Heart right ventricle (tissue), 16 donors: ENCODE measurements at regions of chr9 and their contacts with region 1.

Region 1: GRCh38 chr9:134929193-134930158 is 11.8 kb upstream of the FCN1 start:
- DNase-seq: peak in 1 of 2 donors; percentile 42
- ATAC-seq: peak; percentile 76 to 91 (median 85)
- H3K4me3 ChIP-seq: peak overlapping the region in 1 of 10 donors; percentile 18
- H3K27ac ChIP-seq: peak overlapping the region in 2 of 10 donors; percentile 35 to 80
- H3K4me1 ChIP-seq: peaks cover 0 to 78% (median 10%) of the 10 kb centered on the region in 9 donors
- H3K27me3 ChIP-seq: peaks cover 0 to 23% (median 0%) of the 10 kb centered on the region in 7 donors
- CTCF ChIP-seq: peak in 2 of 9 donors; percentile 19 to 33

Region 2: DNA sequence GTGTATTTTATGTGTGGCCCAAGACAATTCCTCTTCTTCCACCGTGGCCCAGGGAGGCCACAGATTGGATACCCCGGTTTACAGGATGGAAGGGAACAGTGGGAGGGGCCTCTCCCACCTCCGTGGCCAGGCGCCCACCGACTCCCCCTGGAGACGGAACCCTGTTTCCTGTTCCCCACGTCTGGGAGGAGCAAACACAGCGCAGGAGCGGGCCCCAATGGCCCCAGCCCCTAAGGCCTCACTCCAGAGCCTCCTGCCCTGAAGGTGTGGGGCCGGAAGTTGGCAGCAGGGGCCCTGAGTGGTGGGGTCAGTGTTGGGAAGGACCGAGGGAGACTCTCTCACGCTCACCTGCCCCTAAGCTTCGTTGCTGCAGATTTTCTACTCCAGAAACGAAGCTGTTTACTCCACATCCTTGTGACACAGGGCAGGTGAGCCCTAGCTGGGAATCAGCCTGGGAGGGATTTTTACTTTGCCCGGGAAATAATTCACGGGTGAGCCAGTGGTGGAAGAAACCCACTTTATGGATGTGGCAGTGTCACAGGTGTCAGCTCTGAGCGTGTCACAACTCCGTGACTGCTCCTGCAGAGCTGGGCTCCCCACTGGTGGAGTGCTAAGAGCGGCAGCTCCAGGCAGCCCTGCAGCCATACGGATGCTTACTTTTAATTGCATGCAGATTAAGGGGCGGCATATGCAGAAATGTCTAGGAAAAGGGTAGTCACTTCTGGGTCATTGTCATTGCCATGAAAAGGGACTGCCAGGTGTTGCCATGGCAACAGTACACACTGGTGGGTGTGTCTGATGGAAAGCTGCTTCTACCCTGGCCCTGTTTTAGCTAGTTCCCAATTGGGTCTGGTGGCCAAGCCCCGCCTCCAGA is 80.5 kb after region 1 on chr9:
- intact Hi-C with region 1: loop called in 1 of 10 experiments (anchors 10 kb)
- DNase-seq: no peak
- ATAC-seq: no peak
- H3K4me3 ChIP-seq: no peak overlapping the region
- H3K27ac ChIP-seq: no peak overlapping the region
- H3K4me1 ChIP-seq: no peaks in the 10 kb centered on the region
- H3K27me3 ChIP-seq: peaks cover 0 to 25% (median 7%) of the 10 kb centered on the region in 7 donors
- CTCF ChIP-seq: no peak

Region 3: GRCh38 chr9:135980926-135981630 is 1051.6 kb after region 1 on chr9:
- intact Hi-C with region 1: loop called in 1 of 10 experiments (anchors 5 kb)
- DNase-seq: peak in 1 of 2 donors; percentile 51
- ATAC-seq: peak in 7 of 8 donors; percentile 22 to 90 (median 69)
- H3K4me3 ChIP-seq: no peak overlapping the region
- H3K27ac ChIP-seq: no peak overlapping the region
- H3K4me1 ChIP-seq: peaks cover 4 to 15% (median 12%) of the 10 kb centered on the region in 9 donors
- H3K27me3 ChIP-seq: peaks cover 0 to 10% (median 0%) of the 10 kb centered on the region in 7 donors
- CTCF ChIP-seq: no peak